ENCODE measurements at regions of chr3 and their contacts with region 1.

Region 1: DNA sequence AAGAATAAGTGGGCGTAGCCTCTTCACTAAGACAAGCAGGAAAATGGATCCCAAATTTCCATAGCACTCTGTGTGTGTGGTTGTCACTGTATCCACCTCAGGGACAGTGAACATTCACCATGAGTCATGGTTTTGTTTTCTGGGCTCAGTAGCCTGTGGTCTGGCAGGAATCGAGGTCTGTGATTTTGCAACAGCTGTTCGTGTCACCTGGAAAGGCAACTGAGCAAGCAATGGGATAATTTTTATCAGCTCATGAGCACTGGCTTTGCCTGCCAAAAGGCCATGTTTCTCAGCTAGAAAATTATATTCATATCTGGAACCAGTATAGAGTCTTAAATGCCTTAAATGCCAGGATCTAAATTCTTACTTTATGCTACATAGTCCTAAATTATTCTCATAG is 60.9 kb downstream of the STRIT1 start:
- DNase-seq: peak; percentile 78

Region 2: DNA sequence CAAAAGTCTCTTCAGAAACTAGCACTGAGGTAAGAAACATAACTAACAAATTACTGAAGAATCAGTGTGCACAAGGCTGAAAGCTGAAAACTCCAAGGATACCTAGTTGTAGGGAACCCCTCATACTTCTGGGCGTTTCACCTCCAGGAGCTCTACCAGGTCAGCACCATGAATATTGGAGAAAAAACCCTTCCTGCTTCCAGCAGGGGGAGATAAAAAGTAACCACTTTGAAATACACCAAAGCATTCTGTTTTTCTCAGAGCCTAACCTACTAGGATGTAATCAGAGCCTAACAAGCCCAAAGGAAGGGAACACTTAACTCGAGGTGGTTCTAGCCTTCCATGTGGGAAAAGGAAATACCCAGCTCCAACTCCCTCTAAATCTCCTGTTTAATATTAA is 328.3 kb before region 1 on chr3:
- intact Hi-C with region 1: loop called (anchors 5 kb)
- DNase-seq: no peak

Region 3: DNA sequence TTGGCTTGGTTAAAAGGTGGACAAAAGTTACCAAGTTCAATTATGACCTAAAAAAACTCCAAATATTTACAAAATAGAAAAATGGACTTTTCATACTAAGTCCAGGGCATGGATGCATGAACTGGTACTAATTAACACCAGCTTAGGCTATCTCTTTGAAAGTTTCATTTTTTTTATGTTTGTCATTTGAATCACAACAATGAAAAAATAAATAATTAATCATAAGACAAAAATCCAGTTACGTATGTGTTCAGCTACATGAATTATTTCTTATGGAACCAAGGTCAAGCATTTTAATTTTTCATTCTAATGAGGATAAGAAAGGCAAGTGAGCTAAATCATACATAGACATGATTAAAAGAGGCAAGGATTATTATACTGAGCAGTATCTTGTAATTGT is 84.6 kb after region 1 on chr3:
- intact Hi-C with region 1: loop called (anchors 2 kb)
- DNase-seq: no peak